ENCODE measurements at regions of chr22 and their contacts with region 1.

Region 1: DNA sequence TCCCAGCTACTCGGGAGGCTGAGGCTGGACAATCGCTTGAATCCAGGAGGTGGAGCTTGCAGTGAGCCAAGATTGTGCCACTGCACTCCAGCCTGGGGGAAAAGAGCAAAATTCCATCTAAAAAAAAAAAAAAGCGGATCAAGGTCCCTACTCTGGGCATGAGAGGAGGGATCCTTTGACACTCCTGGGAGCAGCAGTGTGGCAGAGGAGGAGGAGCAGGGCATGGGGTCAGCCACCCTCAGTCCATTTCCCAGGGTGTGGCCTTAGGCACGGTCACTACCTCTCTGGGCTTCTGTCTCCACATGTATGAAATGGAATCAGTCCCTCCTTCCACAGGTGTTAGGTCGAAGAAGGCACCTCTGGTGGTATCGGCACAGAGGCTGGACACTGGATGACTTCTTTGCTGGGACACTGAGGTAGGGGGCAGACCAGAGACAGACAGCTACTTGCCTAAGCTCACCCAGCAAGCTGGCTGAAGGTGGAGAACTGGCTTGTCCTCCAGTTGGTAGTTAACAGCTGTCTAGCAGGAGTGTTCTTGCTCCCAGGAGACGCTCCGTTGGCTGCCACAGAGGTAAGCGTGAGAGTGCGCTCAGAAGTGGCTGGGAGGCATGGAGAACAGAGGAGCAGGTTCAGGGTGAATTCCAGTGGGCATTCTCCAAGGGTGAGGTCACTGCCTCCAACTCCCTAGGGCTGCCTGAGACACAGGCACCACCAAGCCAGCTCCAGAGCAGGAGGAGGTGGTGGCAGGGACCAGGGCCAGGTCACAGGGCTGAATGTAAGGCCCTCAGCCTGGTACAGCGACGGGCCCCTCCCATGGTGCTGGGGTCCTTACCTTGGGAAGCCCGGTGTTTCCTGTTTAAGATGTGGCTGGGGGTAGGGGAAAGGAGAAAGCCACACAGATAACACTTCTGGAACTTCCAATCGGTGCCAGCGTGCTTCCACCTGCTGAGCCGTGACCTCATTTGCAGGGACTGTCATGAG is 19.5 kb downstream of the TXN2 start:
- DNase-seq: peak; percentile 92
- H3K4me3 ChIP-seq: no peak overlapping the region
- H3K27ac ChIP-seq: peak overlapping the region; percentile 64
- H3K4me1 ChIP-seq: peaks cover 36% of the 10 kb centered on the region
- H3K27me3 ChIP-seq: no peaks in the 10 kb centered on the region
- CTCF ChIP-seq: no peak

Region 2: DNA sequence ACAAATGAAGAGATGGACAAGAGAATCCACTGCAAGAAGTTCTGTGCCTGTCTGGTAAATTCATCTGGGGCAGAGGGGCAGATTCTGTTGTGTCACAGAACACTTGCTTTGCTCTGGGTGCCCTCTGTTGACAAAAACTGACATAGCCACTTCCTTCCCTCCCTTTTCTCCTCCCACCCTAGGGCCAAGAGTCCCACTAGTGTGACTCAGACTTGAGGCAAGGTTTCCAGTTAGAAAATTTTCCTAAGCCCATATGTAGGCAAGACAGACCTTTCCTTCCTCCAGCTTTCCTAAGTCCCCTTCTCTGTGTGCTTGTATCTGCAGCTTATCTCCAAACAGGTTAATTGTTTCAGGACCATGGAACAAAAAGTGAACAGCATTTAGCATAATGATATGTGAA is 540.2 kb before region 1 on chr22:
- CTCF ChIA-PET with region 1: no interaction called
- dilution Hi-C with region 1: no loop called
- in situ Hi-C with region 1: no loop called
- intact Hi-C with region 1: no loop called
- DNase-seq: peak; percentile 87
- H3K4me3 ChIP-seq: no peak overlapping the region
- H3K27ac ChIP-seq: peak overlapping the region; percentile 27
- H3K4me1 ChIP-seq: peaks cover 32% of the 10 kb centered on the region
- H3K27me3 ChIP-seq: no peaks in the 10 kb centered on the region
- CTCF ChIP-seq: peak; percentile 46 to 74

Region 3: DNA sequence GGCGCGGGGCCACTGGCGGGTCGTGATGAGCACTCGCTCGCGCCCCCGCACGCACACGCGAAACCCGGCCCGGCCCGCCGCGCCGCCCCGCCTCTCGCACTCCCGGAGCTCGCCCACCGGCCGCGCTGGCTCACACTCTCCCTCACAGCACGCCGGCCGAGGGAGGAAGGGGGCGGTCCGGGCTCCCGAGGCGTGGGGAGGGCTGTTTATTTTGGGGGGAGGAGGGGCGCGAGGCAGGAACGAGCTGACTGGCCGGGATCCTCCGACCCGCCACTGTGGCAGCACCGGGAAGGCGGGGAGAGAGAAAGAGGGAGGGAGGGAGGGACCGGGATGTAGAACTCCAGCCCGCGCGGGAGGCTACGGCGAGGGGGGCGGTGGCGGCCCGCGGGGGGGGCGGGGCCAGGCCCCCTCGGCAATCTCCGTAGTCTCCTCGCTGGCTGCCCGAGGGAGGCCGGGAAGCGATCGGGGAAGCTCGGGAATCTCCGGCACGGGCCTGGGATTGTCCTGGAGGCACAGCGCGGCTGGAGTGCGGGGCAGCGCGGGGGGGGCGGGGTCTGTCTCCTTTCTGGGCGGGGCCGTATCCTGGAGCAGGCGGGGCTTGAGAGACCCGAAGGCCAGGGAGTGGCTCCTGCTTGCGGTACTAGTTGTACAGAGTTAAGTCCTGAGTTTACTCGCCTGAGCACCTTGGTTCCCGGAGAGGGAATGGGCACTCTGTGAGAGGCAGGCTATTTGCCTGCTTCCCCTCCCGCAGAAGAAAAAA is 433.1 kb before region 1 on chr22 and contains the start of gene RBFOX2:
- CTCF ChIA-PET with region 1: no interaction called
- dilution Hi-C with region 1: no loop called
- in situ Hi-C with region 1: no loop called
- intact Hi-C with region 1: loop called (anchors 10 kb)
- DNase-seq: peak; percentile 96
- H3K4me3 ChIP-seq: peak within 1 kb of the TSS; percentile 84 to 92 (median 86)
- H3K27ac ChIP-seq: peak within 1 kb of the TSS; percentile 66
- H3K4me1 ChIP-seq: peaks cover 16% of the 10 kb centered on the region
- H3K27me3 ChIP-seq: no peaks in the 10 kb centered on the region
- CTCF ChIP-seq: no peak
- total RNA-seq, gene RBFOX2: 126 to 137 TPM

Region 4: GRCh38 chr22:36331306-36331911 is 130.6 kb before region 1 on chr22:
- CTCF ChIA-PET with region 1: no interaction called
- dilution Hi-C with region 1: no loop called
- in situ Hi-C with region 1: no loop called
- intact Hi-C with region 1: loop called (anchors 1 kb)
- DNase-seq: peak; percentile 97
- H3K4me3 ChIP-seq: no peak overlapping the region
- H3K27ac ChIP-seq: peak overlapping the region; percentile 99
- H3K4me1 ChIP-seq: peaks cover 98% of the 10 kb centered on the region
- H3K27me3 ChIP-seq: no peaks in the 10 kb centered on the region
- CTCF ChIP-seq: no peak

Region 5: DNA sequence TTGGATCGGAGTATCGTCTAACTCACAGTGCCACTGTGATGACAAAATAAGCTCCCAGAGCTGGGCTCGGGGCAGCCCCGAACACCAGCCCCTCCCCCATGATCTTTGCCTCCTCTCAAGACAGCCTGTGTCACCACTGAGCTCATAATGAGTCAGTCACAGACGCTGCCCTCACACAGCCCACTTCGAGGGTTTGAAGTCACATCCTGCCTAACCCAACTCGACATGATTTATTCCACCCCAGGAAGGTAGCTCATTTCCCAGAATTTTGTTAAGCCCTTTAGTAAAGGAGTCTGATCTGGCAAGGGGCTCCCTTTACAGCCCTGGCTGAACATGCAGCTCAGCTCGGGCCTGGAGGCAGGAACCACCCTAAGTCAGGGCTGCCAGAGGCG is 96.9 kb before region 1 on chr22:
- CTCF ChIA-PET with region 1: no interaction called
- dilution Hi-C with region 1: loop called (anchors 5 kb)
- in situ Hi-C with region 1: no loop called
- intact Hi-C with region 1: no loop called
- DNase-seq: peak; percentile 97
- H3K4me3 ChIP-seq: no peak overlapping the region
- H3K27ac ChIP-seq: peak overlapping the region; percentile 76
- H3K4me1 ChIP-seq: peaks cover 95% of the 10 kb centered on the region
- H3K27me3 ChIP-seq: no peaks in the 10 kb centered on the region
- CTCF ChIP-seq: no peak

Region 6: GRCh38 chr22:36398621-36399469 is 63.1 kb before region 1 on chr22:
- CTCF ChIA-PET with region 1: interaction called, 3 read pairs
- dilution Hi-C with region 1: no loop called
- in situ Hi-C with region 1: loop called in 1 of 2 experiments (anchors 10 kb)
- intact Hi-C with region 1: no loop called
- DNase-seq: peak; percentile 77
- H3K4me3 ChIP-seq: no peak overlapping the region
- H3K27ac ChIP-seq: peak overlapping the region; percentile 40
- H3K4me1 ChIP-seq: peaks cover 49% of the 10 kb centered on the region
- H3K27me3 ChIP-seq: no peaks in the 10 kb centered on the region
- CTCF ChIP-seq: no peak

Measured in mammary epithelial cell (primary cell).